ENCODE measurements at regions of chr13 and their contacts with region 1.

Region 1: GRCh38 chr13:51583875-51584730 is at the start of gene WDFY2:
- DNase-seq: peak; percentile 99 to 100
- ATAC-seq: peak; percentile 82 to 95 (median 84)
- H3K4me3 ChIP-seq: peak within 1 kb of the TSS; percentile 83
- H3K4me3 Mint-ChIP-seq: peak within 1 kb of the TSS; percentile 94
- H3K27ac ChIP-seq: peak within 1 kb of the TSS; percentile 86
- H3K27ac Mint-ChIP-seq: peak within 1 kb of the TSS; percentile 88 to 90
- H3K4me1 ChIP-seq: peaks cover 10% of the 10 kb centered on the region
- H3K4me1 Mint-ChIP-seq: peaks cover 26 to 35% of the 10 kb centered on the region in 2 donors
- H3K27me3 ChIP-seq: no peaks in the 10 kb centered on the region
- H3K27me3 Mint-ChIP-seq: no peaks in the 10 kb centered on the region
- CTCF ChIP-seq: no peak
- total RNA-seq, gene WDFY2: 29.5 to 32.1 (median 31.3) TPM

Region 2: GRCh38 chr13:50572129-50572528 is 1012.0 kb before region 1 on chr13:
- intact Hi-C with region 1: no loop called
- DNase-seq: no peak
- ATAC-seq: no peak
- H3K4me3 ChIP-seq: no peak overlapping the region
- H3K4me3 Mint-ChIP-seq: no peak overlapping the region
- H3K27ac ChIP-seq: no peak overlapping the region
- H3K27ac Mint-ChIP-seq: no peak overlapping the region
- H3K4me1 ChIP-seq: no peaks in the 10 kb centered on the region
- H3K4me1 Mint-ChIP-seq: no peaks in the 10 kb centered on the region
- H3K27me3 ChIP-seq: no peaks in the 10 kb centered on the region
- H3K27me3 Mint-ChIP-seq: peaks cover 4 to 29% of the 10 kb centered on the region in 2 donors
- CTCF ChIP-seq: no peak

Region 3: GRCh38 chr13:51645154-51645650 is 61.1 kb after region 1 on chr13:
- intact Hi-C with region 1: loop called (anchors 2 kb)
- DNase-seq: peak; percentile 40 to 77
- ATAC-seq: peak; percentile 81 to 91 (median 84)
- H3K4me3 ChIP-seq: no peak overlapping the region
- H3K4me3 Mint-ChIP-seq: peak overlapping the region; percentile 61
- H3K27ac ChIP-seq: peak overlapping the region; percentile 86
- H3K27ac Mint-ChIP-seq: peak overlapping the region; percentile 96
- H3K4me1 ChIP-seq: peaks cover 27% of the 10 kb centered on the region
- H3K4me1 Mint-ChIP-seq: peaks cover 40 to 48% of the 10 kb centered on the region in 2 donors
- H3K27me3 ChIP-seq: no peaks in the 10 kb centered on the region
- H3K27me3 Mint-ChIP-seq: no peaks in the 10 kb centered on the region
- CTCF ChIP-seq: no peak

Region 4: GRCh38 chr13:51729866-51730546 is 145.9 kb after region 1 on chr13:
- intact Hi-C with region 1: loop called (anchors 10 kb)
- DNase-seq: no peak
- ATAC-seq: no peak
- H3K4me3 ChIP-seq: no peak overlapping the region
- H3K4me3 Mint-ChIP-seq: no peak overlapping the region
- H3K27ac ChIP-seq: no peak overlapping the region
- H3K27ac Mint-ChIP-seq: no peak overlapping the region
- H3K4me1 ChIP-seq: peaks cover 9% of the 10 kb centered on the region
- H3K4me1 Mint-ChIP-seq: peaks cover 18 to 20% of the 10 kb centered on the region in 2 donors
- H3K27me3 ChIP-seq: no peaks in the 10 kb centered on the region
- H3K27me3 Mint-ChIP-seq: no peaks in the 10 kb centered on the region
- CTCF ChIP-seq: no peak

Region 5: GRCh38 chr13:52011632-52012511 is 427.8 kb after region 1 on chr13 and contains the start of gene ALG11:
- intact Hi-C with region 1: loop called (anchors 5 kb)
- DNase-seq: peak; percentile 99
- ATAC-seq: peak; percentile 98 to 100 (median 98)
- H3K4me3 ChIP-seq: peak within 1 kb of the TSS; percentile 88
- H3K4me3 Mint-ChIP-seq: peak within 1 kb of the TSS; percentile 99
- H3K27ac ChIP-seq: peak within 1 kb of the TSS; percentile 64
- H3K27ac Mint-ChIP-seq: peak within 1 kb of the TSS; percentile 93 to 96
- H3K4me1 ChIP-seq: peaks cover 9% of the 10 kb centered on the region
- H3K4me1 Mint-ChIP-seq: peaks cover 21 to 32% of the 10 kb centered on the region in 2 donors
- H3K27me3 ChIP-seq: peaks cover 8% of the 10 kb centered on the region
- H3K27me3 Mint-ChIP-seq: peaks cover 24 to 27% of the 10 kb centered on the region in 2 donors
- CTCF ChIP-seq: no peak
- total RNA-seq, gene ALG11: 30.8 to 35.8 (median 35.2) TPM